Activated naive CD4-positive, alpha-beta T cell treated with anti-CD3 and anti-CD28 coated beads for 36 hours (primary cell): ENCODE measurements at regions of chr10 and their contacts with region 1.

Region 1: GRCh38 chr10:104337974-104338735 is at the start of gene ITPRIP:
- DNase-seq: peak; percentile 78
- H3K4me3 Mint-ChIP-seq: peak within 1 kb of the TSS; percentile 84
- H3K27ac Mint-ChIP-seq: peak within 1 kb of the TSS; percentile 98
- H3K4me1 Mint-ChIP-seq: peaks cover 46% of the 10 kb centered on the region
- H3K27me3 Mint-ChIP-seq: no peaks in the 10 kb centered on the region
- total RNA-seq, gene ITPRIP: 24.5 to 25.3 TPM

Region 2: GRCh38 chr10:103696411-103697145 is 641.6 kb before region 1 on chr10:
- CTCF ChIA-PET with region 1: no interaction called
- intact Hi-C with region 1: loop called (anchors 10 kb)
- DNase-seq: peak; percentile 92
- H3K4me3 Mint-ChIP-seq: peak overlapping the region; percentile 28
- H3K27ac Mint-ChIP-seq: no peak overlapping the region
- H3K4me1 Mint-ChIP-seq: peaks cover 22% of the 10 kb centered on the region
- H3K27me3 Mint-ChIP-seq: no peaks in the 10 kb centered on the region

Region 3: GRCh38 chr10:104291439-104291951 is 46.7 kb before region 1 on chr10:
- CTCF ChIA-PET with region 1: interaction called, 22 read pairs
- intact Hi-C with region 1: no loop called
- DNase-seq: peak; percentile 93
- H3K4me3 Mint-ChIP-seq: peak overlapping the region; percentile 10
- H3K27ac Mint-ChIP-seq: no peak overlapping the region
- H3K4me1 Mint-ChIP-seq: peaks cover 19% of the 10 kb centered on the region
- H3K27me3 Mint-ChIP-seq: peaks cover 3% of the 10 kb centered on the region

Region 4: DNA sequence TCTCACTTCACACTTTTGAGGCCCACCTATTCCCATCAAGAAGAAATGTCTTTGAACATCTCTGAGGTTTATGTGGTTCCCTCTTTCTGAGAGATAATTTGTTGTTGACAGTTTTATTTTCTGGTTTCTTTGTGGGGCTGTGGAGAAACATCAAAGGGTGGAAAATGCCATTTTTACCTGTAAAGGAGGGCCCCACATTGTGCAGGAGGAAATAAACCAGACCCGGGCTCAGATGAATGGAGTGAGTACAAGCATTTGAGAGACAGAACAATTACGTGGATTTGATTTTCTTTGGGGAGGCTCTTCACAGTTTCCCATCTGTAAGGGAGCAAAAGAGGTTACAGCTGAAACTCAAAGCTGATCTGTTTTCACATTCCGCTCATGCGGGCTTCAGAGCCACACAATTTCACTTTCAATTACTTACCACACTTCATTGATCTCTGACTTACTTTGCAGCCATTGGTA is 29.7 kb before region 1 on chr10:
- CTCF ChIA-PET with region 1: interaction called, 67 read pairs
- intact Hi-C with region 1: loop called (anchors 1 kb)
- DNase-seq: peak; percentile 58
- H3K4me3 Mint-ChIP-seq: peak overlapping the region; percentile 17
- H3K27ac Mint-ChIP-seq: peak overlapping the region; percentile 89
- H3K4me1 Mint-ChIP-seq: peaks cover 60% of the 10 kb centered on the region
- H3K27me3 Mint-ChIP-seq: peaks cover 3% of the 10 kb centered on the region

Region 5: GRCh38 chr10:105017116-105017515 is 679.0 kb after region 1 on chr10:
- CTCF ChIA-PET with region 1: no interaction called
- intact Hi-C with region 1: loop called (anchors 2 kb)
- DNase-seq: peak; percentile 66
- H3K4me3 Mint-ChIP-seq: no peak overlapping the region
- H3K27ac Mint-ChIP-seq: no peak overlapping the region
- H3K4me1 Mint-ChIP-seq: peaks cover 32% of the 10 kb centered on the region
- H3K27me3 Mint-ChIP-seq: no peaks in the 10 kb centered on the region